Activated CD4-positive, alpha-beta memory T cell treated with anti-CD3 and anti-CD28 coated beads, Interleukin-2, amount 10 ng/mL, durations not matched to agents 7 days and 5 days (primary cell): ENCODE measurements at regions of chr1 and their contacts with region 1.

Region 1: GRCh38 chr1:46197964-46198811 is at the start of gene POMGNT1:
- DNase-seq: peak; percentile 85
- H3K4me3 Mint-ChIP-seq: peak within 1 kb of the TSS; percentile 78
- H3K27ac Mint-ChIP-seq: peak within 1 kb of the TSS; percentile 44
- H3K4me1 Mint-ChIP-seq: peaks cover 28% of the 10 kb centered on the region
- H3K27me3 Mint-ChIP-seq: peaks cover 2% of the 10 kb centered on the region
- total RNA-seq, gene POMGNT1: 27.4 to 28.5 TPM

Region 2: GRCh38 chr1:46166521-46167462 is 31.4 kb before region 1 on chr1:
- CTCF ChIA-PET with region 1: no interaction called
- POLR2A ChIA-PET with region 1: interaction called, 13 read pairs
- DNase-seq: peak; percentile 56
- H3K4me3 Mint-ChIP-seq: peak overlapping the region; percentile 74
- H3K27ac Mint-ChIP-seq: peak overlapping the region; percentile 71
- H3K4me1 Mint-ChIP-seq: peaks cover 18% of the 10 kb centered on the region
- H3K27me3 Mint-ChIP-seq: peaks cover 12% of the 10 kb centered on the region

Region 3: DNA sequence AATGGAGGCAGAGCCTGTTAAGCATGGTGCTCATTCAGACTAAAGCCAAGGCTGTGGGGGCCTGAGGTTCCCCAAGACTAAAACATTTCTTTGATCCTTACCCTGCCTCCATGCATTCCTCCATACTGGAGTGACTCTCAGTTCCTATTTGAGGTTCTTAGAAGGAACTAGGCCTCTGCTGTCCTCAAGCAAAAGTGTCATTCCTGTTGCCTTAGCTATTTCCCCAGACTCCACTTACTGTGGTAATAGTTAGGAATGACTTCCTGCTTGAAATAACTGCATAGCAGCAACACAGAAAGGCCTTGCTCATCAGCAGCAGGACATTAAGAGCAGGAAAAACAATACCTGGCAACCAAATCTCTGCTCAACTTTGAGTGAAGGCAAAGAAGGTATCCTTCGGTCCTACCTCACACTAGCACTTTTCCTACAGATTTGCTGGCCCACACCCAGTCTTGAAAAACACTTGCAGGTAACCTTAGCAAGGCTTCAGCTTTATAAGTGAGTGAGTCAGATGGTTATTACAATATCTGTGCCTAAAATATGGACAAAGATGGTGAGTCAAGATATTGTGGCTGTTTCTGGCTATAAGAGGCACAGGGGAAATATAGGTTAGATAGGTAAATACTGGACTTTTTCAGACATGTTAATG is 90.4 kb after region 1 on chr1:
- CTCF ChIA-PET with region 1: no interaction called
- POLR2A ChIA-PET with region 1: no interaction called
- DNase-seq: no peak
- H3K4me3 Mint-ChIP-seq: no peak overlapping the region
- H3K27ac Mint-ChIP-seq: peak overlapping the region; percentile 8
- H3K4me1 Mint-ChIP-seq: peaks cover 13% of the 10 kb centered on the region
- H3K27me3 Mint-ChIP-seq: no peaks in the 10 kb centered on the region